ENCODE measurements at regions of chr17 and their contacts with region 1.

Region 1: DNA sequence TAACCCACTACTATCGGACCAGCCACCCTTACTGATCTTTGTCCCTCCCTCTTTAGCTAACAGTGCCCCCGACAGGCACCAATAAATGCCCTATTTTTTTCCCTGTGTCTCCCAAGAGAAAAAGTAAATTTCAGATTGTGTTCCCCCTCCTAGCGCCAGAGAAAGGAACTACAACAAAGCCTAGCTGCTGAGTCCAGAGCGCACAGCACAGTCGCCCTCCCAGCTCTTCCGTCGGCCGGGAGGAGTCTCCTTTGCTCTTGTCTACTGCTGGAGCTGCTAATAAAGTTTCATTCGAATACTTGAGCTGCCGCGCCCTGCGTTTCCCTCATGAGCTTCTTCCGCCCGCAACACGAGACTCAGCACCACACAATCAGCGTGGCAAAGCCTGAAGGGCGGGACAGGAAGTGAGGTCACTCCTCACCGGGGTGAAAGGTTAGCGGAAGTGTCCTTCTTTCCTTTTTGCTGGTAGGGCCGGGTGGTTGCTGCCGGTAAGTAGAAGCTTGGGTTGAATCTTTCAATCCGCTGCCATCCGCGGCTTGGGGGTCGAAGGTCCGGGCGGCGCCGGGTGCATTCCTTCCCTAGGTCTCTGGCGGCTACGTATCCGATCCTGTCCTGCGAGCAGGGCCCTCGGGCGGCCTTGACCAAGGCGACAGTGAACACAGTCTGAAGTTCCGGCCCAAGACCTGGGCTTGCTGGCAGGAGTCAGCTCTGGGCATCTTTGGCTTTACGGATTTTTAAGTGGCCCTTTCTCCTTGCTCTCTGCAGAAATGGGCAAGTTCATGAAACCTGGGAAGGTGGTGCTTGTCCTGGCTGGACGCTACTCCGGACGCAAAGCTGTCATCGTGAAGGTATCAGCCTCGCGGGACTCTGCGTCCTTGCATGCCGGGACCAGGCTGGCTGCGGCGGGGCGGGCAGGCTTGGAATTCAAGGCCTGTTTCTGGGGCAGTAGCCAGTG is at the start of gene RPL27:
- DNase-seq: peak; percentile 95 to 99
- ATAC-seq: peak; percentile 97 to 99 (median 99)
- H3K4me3 ChIP-seq: peak within 1 kb of the TSS; percentile 69 to 94 (median 84)
- H3K27ac ChIP-seq: peak within 1 kb of the TSS; percentile 63 to 96 (median 88)
- H3K4me1 ChIP-seq: peaks cover 5 to 45% (median 22%) of the 10 kb centered on the region in 9 donors
- H3K27me3 ChIP-seq: no peaks in the 10 kb centered on the region
- CTCF ChIP-seq: peak; percentile 77 to 94 (median 89)
- total RNA-seq, gene RPL27: 388 to 841 (median 519) TPM

Region 2: GRCh38 chr17:42312285-42313130 is 685.8 kb before region 1 on chr17:
- intact Hi-C with region 1: no loop called
- DNase-seq: peak; percentile 86 to 89
- ATAC-seq: peak; percentile 72 to 90 (median 84)
- H3K4me3 ChIP-seq: peak overlapping the region in 7 of 10 donors; percentile 10 to 34 (median 25)
- H3K27ac ChIP-seq: peak overlapping the region; percentile 24 to 86 (median 77)
- H3K4me1 ChIP-seq: peaks cover 10 to 73% (median 35%) of the 10 kb centered on the region in 9 donors
- H3K27me3 ChIP-seq: no peaks in the 10 kb centered on the region
- CTCF ChIP-seq: peak; percentile 34 to 81 (median 66)

Region 3: DNA sequence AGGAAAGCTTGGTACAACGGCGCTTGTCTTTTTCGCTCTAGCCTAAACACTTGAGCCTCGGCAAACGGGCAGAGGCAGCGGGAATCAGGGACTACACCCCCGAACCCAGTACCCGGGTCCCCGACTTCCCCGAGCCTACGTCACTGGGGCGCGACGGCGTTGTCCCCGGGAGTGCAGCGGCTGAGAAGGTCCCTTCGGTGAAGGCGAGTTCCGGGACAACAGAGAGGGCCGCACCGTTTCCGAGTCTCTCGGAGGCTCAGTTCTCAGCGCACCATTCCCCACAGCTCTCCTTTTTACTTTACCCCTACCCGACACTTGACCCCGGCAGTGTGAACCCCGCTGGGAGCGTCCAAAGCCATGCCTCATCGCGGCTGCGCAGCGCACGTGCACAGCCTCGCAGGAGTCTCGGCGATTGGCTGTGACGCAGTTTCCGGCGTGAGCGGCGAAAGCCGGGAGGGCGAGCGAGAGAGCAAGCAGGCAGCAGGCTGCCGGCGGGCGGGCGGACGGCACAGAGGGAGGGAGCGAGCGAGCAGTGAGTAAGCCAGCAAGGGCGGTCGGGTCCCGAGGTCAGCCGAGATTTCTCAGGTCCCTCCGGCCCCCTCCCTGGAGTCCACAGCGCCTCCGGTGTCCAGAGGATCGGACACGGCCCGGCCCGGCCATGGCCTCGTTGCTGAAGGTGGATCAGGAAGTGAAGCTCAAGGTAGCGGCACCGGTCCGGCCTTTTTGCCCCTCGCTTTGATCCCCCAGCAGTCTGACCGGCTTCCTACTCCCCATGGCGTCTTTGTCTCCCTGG is 165.1 kb before region 1 on chr17 and contains the start of gene PSME3:
- intact Hi-C with region 1: loop called in 1 of 10 experiments (anchors 5 kb)
- DNase-seq: peak; percentile 92
- ATAC-seq: peak; percentile 96 to 98 (median 98)
- H3K4me3 ChIP-seq: peak within 1 kb of the TSS; percentile 66 to 99 (median 93)
- H3K27ac ChIP-seq: peak within 1 kb of the TSS; percentile 46 to 97 (median 88)
- H3K4me1 ChIP-seq: peaks cover 7 to 29% (median 19%) of the 10 kb centered on the region in 9 donors
- H3K27me3 ChIP-seq: no peaks in the 10 kb centered on the region
- CTCF ChIP-seq: peak in 2 of 9 donors; percentile 18 to 36
- total RNA-seq, gene PSME3: 52.1 to 87.4 (median 70.3) TPM

Region 4: GRCh38 chr17:42980398-42981397 is 17.6 kb before region 1 on chr17 and contains the start of gene RUNDC1:
- intact Hi-C with region 1: loop called in 2 of 10 experiments (anchors 1 to 2 kb)
- DNase-seq: peak; percentile 94 to 95
- ATAC-seq: peak; percentile 90 to 97 (median 96)
- H3K4me3 ChIP-seq: peak within 1 kb of the TSS; percentile 78 to 97 (median 88)
- H3K27ac ChIP-seq: peak within 1 kb of the TSS; percentile 78 to 94 (median 88)
- H3K4me1 ChIP-seq: peaks cover 2 to 40% (median 27%) of the 10 kb centered on the region in 9 donors
- H3K27me3 ChIP-seq: no peaks in the 10 kb centered on the region
- CTCF ChIP-seq: peak in 3 of 9 donors; percentile 11 to 23 (median 21)
- total RNA-seq, gene RUNDC1: 7.5 to 21.0 (median 11.6) TPM

Measured in heart right ventricle (tissue), 16 donors.